Activated B cell treated with CpG ODN at 0.5 μM for 24 hours (primary cell): ENCODE measurements at regions of chr19 and their contacts with region 1.

Region 1: DNA sequence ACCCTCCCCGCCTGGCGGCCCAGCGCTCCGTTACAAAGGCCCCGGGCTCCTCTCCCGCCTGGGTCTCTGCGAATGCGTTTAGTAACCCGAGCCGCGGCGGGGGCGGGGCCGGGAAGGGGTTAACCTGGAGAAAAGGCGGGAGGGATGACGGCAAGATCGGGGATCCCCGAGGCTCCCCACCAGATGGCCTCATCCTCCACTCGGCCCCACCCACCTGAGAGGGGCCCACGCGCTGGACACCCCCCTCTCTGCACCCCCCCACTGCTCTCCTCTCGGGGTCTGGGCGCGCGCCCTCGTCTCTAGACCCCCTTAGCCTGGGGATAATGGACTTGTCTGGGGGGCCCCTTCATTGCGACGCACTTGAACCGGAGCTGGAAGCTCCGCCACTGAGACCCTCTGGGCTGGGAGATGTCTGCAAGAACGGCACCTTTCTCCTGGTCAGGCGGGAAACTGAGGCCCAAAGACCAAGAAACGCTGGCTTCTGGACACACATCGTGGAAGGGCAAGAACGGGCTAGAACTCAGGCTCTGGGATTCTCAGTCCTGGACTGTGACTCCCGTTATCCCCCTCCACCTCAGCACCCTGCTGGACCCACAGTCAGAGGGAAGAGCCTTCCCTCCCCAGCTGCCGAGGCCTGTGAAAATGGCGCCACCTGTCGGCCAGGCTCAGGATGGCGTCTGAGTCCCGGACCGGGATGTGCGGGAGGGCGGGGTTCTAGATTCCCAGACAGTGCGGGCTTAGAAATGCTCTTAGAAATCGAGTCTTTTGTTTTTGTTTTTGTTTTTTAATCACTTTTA is 2.9 kb upstream of the LTBP4 start:
- DNase-seq: peak; percentile 82
- ATAC-seq: peak; percentile 66
- H3K4me3 Mint-ChIP-seq: no peak overlapping the region
- H3K27ac Mint-ChIP-seq: no peak overlapping the region
- H3K4me1 Mint-ChIP-seq: peaks cover 46% of the 10 kb centered on the region
- H3K27me3 Mint-ChIP-seq: peaks cover 32% of the 10 kb centered on the region
- CTCF ChIP-seq: peak; percentile 60

Region 2: DNA sequence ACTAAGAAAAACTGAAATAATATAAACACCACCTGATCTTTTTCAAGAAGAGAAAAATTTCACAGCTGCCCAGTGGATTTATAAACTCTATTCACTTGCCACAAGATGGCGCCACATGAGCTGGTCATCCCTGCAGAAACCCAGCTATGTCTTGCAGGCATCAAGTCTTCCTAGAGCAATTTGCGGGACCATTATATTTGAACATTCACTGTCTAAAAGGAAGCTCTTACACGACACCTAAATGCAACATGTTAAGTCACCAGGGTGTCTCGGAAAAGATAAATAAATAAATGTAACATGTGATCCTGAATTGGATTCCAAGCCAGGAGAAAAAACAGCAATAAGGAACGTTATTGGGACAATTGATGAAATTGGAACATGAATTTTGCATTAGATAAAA is 292.9 kb before region 1 on chr19:
- CTCF ChIA-PET with region 1: interaction called, 12 read pairs
- POLR2A ChIA-PET with region 1: interaction called, 3 read pairs
- intact Hi-C with region 1: loop called (anchors 1 kb)
- DNase-seq: peak; percentile 44
- ATAC-seq: peak; percentile 69
- H3K4me3 Mint-ChIP-seq: no peak overlapping the region
- H3K27ac Mint-ChIP-seq: no peak overlapping the region
- H3K4me1 Mint-ChIP-seq: peaks cover 2% of the 10 kb centered on the region
- H3K27me3 Mint-ChIP-seq: no peaks in the 10 kb centered on the region
- CTCF ChIP-seq: no peak

Region 3: DNA sequence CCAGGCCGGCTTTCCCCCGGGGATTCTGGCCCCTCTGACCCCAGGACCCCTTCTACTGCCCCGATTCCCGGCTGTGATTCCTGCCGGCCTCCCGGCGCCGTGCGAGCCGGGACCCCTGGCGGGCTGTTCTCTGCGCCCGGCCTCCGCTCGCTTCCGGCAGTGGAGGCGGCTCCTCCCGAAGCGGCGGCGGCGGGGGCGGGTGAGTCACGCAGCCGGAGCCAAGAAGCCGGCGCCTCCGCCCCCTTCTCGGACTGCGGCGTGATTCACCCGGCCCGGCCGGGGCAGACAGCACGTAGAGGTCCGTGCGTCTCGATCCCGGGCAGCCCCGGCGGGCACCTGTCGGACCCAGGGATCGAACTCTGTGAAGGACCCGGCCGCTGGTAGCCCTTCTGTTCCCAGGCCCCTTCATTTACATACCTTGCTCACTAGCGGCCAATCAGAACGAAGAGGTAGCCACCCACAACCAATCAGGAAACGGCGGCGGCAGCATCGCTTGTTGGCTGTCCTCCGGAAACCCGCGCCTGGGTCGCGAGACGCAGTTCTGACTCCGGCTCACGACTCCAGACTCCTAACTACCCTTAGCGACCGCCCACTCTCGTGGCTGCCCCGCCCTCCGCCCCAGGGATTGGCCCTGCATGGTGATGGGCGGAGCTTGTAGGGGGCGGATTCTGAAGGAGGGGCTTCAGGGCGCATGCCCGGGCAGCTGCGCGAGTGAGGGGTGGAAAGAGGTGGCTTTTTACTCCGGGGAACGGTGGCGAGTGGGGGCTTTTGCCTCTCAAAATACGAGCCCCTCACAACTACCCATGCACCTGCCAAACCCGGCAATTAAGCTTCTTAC is 172.7 kb before region 1 on chr19 and contains the start of gene SERTAD1:
- CTCF ChIA-PET with region 1: no interaction called
- POLR2A ChIA-PET with region 1: no interaction called
- intact Hi-C with region 1: loop called (anchors 5 kb)
- DNase-seq: peak; percentile 100
- ATAC-seq: peak; percentile 90
- H3K4me3 Mint-ChIP-seq: peak within 1 kb of the TSS; percentile 93
- H3K27ac Mint-ChIP-seq: peak within 1 kb of the TSS; percentile 93
- H3K4me1 Mint-ChIP-seq: peaks cover 31% of the 10 kb centered on the region
- H3K27me3 Mint-ChIP-seq: no peaks in the 10 kb centered on the region
- CTCF ChIP-seq: no peak
- total RNA-seq, gene SERTAD1: 13.4 and 13.9 TPM in 2 replicates

Region 4: DNA sequence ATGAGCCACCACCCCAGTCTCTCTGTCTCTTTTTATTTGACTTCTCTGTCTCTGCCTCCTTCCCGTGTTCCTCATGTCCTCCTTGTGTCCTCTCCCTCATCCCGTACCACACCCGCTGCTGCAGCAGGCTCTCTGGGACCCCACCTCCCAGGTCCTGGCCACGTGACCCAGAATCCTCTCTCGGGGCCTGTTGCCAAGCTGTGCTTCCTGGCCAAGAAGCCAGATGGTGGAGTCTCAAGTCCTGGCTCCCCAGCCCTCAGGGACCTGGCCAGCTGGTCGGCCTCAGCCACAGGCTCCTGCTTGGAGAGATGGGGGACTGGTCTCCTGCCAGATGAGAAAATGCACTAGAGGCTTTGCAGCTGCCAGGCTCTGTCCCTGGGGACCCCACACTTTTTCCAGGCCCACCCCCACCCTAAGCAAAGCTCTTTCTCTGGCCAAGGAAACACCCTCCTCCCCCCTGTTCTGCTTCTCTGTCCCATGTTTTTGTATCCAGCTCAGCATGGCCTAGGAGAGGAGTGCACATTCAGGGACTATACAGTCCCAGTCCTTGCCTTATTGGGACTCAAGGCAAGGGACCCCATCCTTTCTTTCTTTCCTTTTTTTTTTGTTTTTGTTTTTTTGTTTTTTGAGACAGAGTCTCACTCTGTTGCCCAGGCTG is 56.0 kb before region 1 on chr19:
- CTCF ChIA-PET with region 1: interaction called, 19 read pairs
- POLR2A ChIA-PET with region 1: no interaction called
- intact Hi-C with region 1: loop called (anchors 2 kb)
- DNase-seq: no peak
- ATAC-seq: no peak
- H3K4me3 Mint-ChIP-seq: no peak overlapping the region
- H3K27ac Mint-ChIP-seq: no peak overlapping the region
- H3K4me1 Mint-ChIP-seq: no peaks in the 10 kb centered on the region
- H3K27me3 Mint-ChIP-seq: peaks cover 7% of the 10 kb centered on the region
- CTCF ChIP-seq: no peak

Region 5: GRCh38 chr19:40570313-40571004 is 27.9 kb before region 1 on chr19:
- CTCF ChIA-PET with region 1: interaction called, 21 read pairs
- POLR2A ChIA-PET with region 1: interaction called, 25 read pairs
- intact Hi-C with region 1: no loop called
- DNase-seq: peak; percentile 98
- ATAC-seq: peak; percentile 95
- H3K4me3 Mint-ChIP-seq: peak overlapping the region; percentile 70
- H3K27ac Mint-ChIP-seq: peak overlapping the region; percentile 81
- H3K4me1 Mint-ChIP-seq: peaks cover 22% of the 10 kb centered on the region
- H3K27me3 Mint-ChIP-seq: peaks cover 13% of the 10 kb centered on the region
- CTCF ChIP-seq: no peak

Region 6: GRCh38 chr19:40609561-40610395 is 11.5 kb after region 1 on chr19:
- CTCF ChIA-PET with region 1: interaction called, 10 read pairs
- POLR2A ChIA-PET with region 1: interaction called, 42 read pairs
- intact Hi-C with region 1: loop called (anchors 2 kb)
- DNase-seq: peak; percentile 92
- ATAC-seq: peak; percentile 54
- H3K4me3 Mint-ChIP-seq: peak overlapping the region; percentile 88
- H3K27ac Mint-ChIP-seq: peak overlapping the region; percentile 94
- H3K4me1 Mint-ChIP-seq: peaks cover 60% of the 10 kb centered on the region
- H3K27me3 Mint-ChIP-seq: no peaks in the 10 kb centered on the region
- CTCF ChIP-seq: no peak

Region 7: DNA sequence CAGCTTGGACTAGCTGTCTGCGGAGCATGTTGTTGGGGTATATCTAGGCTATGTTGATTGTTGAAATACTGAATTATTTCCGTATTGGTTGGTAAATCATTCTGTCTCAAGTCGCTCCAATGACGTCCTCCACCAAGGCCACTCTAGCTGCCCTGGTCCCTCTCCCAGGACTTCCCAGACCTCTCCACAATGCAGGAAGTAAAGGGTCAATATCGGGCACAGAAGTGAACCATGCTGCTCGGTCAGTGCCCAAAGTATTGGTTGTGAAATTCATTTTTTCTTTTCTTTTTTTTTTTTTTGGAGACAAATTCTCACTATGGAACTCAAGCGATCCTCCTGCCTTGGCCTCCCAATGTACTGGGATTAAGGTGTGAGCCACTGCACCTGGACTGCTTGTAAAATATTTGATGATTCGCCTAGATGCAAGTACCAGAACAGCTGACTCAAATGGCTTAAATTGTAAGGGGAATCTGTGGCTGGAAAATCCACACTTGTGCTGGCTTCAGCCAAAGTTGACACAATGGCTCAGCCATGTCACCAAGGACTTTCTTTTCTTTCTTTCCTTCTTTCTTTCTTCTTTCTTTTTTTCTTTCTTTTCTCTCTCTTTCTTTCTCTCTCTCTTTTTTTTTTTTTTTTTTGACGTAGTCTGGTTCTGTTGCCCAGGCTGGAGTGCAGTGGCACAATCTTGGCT is 48.4 kb after region 1 on chr19:
- CTCF ChIA-PET with region 1: no interaction called
- POLR2A ChIA-PET with region 1: no interaction called
- intact Hi-C with region 1: no loop called
- DNase-seq: no peak
- ATAC-seq: no peak
- H3K4me3 Mint-ChIP-seq: no peak overlapping the region
- H3K27ac Mint-ChIP-seq: no peak overlapping the region
- H3K4me1 Mint-ChIP-seq: peaks cover 2% of the 10 kb centered on the region
- H3K27me3 Mint-ChIP-seq: peaks cover 6% of the 10 kb centered on the region
- CTCF ChIP-seq: no peak

Region 8: DNA sequence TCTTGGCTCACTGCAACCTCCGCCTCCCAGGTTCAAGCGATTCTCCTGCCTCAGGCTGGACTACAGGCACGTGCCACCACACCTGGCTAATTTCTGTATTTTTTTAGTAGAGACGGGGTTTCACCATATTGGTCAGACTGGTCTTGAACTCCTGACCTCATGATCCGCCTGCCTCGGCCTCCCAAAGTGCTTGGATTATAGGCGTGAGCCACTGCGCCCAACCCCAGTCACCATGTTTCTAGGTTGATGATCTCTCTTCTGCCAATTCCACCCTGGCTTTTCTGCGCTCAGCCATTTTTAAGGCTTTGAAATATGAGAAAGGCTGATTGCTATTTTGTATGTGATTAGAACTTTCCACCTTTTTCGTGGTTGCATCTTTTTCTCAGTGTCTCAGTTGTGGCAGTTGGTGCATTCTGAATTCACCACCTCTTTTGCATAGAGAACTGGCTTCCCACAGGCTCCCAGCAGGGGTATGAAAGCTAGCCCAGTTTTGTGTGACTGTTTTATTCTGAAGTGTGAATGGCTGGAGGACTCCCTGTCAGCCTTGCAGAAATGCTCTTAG is 1914.5 kb after region 1 on chr19:
- CTCF ChIA-PET with region 1: no interaction called
- POLR2A ChIA-PET with region 1: interaction called, 12 read pairs
- intact Hi-C with region 1: no loop called
- DNase-seq: no peak
- ATAC-seq: peak; percentile 53
- H3K4me3 Mint-ChIP-seq: peak overlapping the region; percentile 49
- H3K27ac Mint-ChIP-seq: peak overlapping the region; percentile 19
- H3K4me1 Mint-ChIP-seq: peaks cover 30% of the 10 kb centered on the region
- H3K27me3 Mint-ChIP-seq: no peaks in the 10 kb centered on the region
- CTCF ChIP-seq: no peak